CD14-positive monocyte (primary cell): ENCODE measurements at regions of chr10 and their contacts with region 1.

Region 1: GRCh38 chr10:99845837-99846382 is 63.5 kb downstream of the ABCC2 start:
- DNase-seq: peak; percentile 79 to 88 (median 86)
- H3K4me3 ChIP-seq: peak overlapping the region; percentile 0 to 64 (median 21)
- H3K4me3 Mint-ChIP-seq: peak overlapping the region; percentile 1 to 81
- H3K27ac ChIP-seq: no peak overlapping the region
- H3K27ac Mint-ChIP-seq: peak overlapping the region in 1 of 7 donors; percentile 58
- H3K4me1 ChIP-seq: peaks cover 13 to 16% of the 10 kb centered on the region in 2 donors
- H3K4me1 Mint-ChIP-seq: peaks cover 28% of the 10 kb centered on the region
- H3K27me3 ChIP-seq: no peaks in the 10 kb centered on the region
- H3K27me3 Mint-ChIP-seq: peaks cover 3 to 8% (median 4%) of the 10 kb centered on the region in 3 donors
- CTCF ChIP-seq: peak; percentile 88

Region 2: DNA sequence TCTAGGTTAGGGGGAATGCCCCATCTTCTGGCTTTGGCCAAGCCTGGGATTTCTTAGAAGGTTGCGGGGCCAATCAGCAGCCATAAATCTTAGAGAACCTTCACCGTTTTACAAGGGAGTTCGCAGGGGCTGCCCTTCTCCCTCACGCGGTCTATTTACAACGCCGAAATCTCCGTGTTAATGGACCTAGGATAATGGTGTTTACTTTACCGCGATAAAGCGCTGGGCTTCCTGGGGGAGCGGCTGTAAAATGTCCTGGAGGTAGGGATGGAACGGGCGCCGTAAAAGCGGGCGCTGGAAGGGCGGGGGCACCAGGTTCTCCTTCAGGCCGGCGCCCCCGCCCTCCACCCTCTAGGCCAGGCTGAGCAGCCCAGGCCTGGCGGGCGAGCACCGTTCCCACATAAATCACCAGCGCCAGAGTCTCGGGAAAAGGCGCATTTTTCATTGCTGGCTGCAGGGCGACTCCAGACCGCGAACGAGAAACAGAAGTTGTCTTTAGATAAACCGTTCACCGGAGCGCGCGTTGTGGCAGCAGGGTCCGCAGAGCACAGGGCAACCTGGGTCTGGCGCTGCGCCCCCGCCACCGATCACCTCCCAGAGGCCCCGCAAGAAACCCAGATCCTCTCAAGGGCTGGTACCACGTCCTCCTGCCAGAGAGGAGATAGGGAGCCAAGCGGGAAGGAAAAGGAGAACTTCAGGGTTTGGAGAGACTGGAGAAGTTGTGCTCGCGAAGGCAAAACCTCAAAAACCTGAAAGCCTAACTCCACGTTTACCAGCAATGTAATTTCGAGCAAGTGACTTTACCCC is 325.7 kb before region 1 on chr10:
- intact Hi-C with region 1: no loop called
- DNase-seq: no peak
- H3K4me3 ChIP-seq: peak overlapping the region in 1 of 3 experiments; percentile 53
- H3K4me3 Mint-ChIP-seq: peak overlapping the region in 1 of 2 donors; percentile 84
- H3K27ac ChIP-seq: no peak overlapping the region
- H3K27ac Mint-ChIP-seq: no peak overlapping the region
- H3K4me1 ChIP-seq: peaks cover 4 to 18% of the 10 kb centered on the region in 2 donors
- H3K4me1 Mint-ChIP-seq: peaks cover 20% of the 10 kb centered on the region
- H3K27me3 ChIP-seq: peaks cover 25 to 66% of the 10 kb centered on the region in 2 donors
- H3K27me3 Mint-ChIP-seq: peaks cover 57 to 72% (median 65%) of the 10 kb centered on the region in 3 donors
- CTCF ChIP-seq: no peak

Region 3: GRCh38 chr10:99983280-99983988 is 137.5 kb after region 1 on chr10:
- intact Hi-C with region 1: no loop called
- DNase-seq: peak; percentile 33 to 60 (median 47)
- H3K4me3 ChIP-seq: peak overlapping the region in 1 of 3 experiments; percentile 43
- H3K4me3 Mint-ChIP-seq: peak overlapping the region; percentile 11 to 37
- H3K27ac ChIP-seq: peak overlapping the region; percentile 68 to 76
- H3K27ac Mint-ChIP-seq: peak overlapping the region; percentile 64 to 91 (median 88)
- H3K4me1 ChIP-seq: peaks cover 38 to 40% of the 10 kb centered on the region in 2 donors
- H3K4me1 Mint-ChIP-seq: peaks cover 39% of the 10 kb centered on the region
- H3K27me3 ChIP-seq: no peaks in the 10 kb centered on the region
- H3K27me3 Mint-ChIP-seq: peaks cover 0 to 6% (median 4%) of the 10 kb centered on the region in 3 donors
- CTCF ChIP-seq: no peak

Region 4: GRCh38 chr10:100046021-100046486 is 200.1 kb after region 1 on chr10:
- intact Hi-C with region 1: loop called (anchors 1 to 2 kb)
- DNase-seq: peak; percentile 67 to 72 (median 69)
- H3K4me3 ChIP-seq: no peak overlapping the region
- H3K4me3 Mint-ChIP-seq: no peak overlapping the region
- H3K27ac ChIP-seq: no peak overlapping the region
- H3K27ac Mint-ChIP-seq: peak overlapping the region in 1 of 7 donors; percentile 35
- H3K4me1 ChIP-seq: no peaks in the 10 kb centered on the region
- H3K4me1 Mint-ChIP-seq: peaks cover 2% of the 10 kb centered on the region
- H3K27me3 ChIP-seq: no peaks in the 10 kb centered on the region
- H3K27me3 Mint-ChIP-seq: peaks cover 0 to 3% (median 1%) of the 10 kb centered on the region in 3 donors
- CTCF ChIP-seq: peak; percentile 93